Right ventricle myocardium inferior (tissue), 1 donor: ENCODE measurements at regions of chr1 and their contacts with region 1.

Region 1: GRCh38 chr1:12184008-12184681 is 17.4 kb downstream of the TNFRSF1B start:
- DNase-seq: peak; percentile 92
- ATAC-seq: peak; percentile 85

Region 2: GRCh38 chr1:12143631-12144155 is 40.5 kb before region 1 on chr1:
- intact Hi-C with region 1: loop called (anchors 5 kb)
- DNase-seq: peak; percentile 89
- ATAC-seq: peak; percentile 82